ENCODE measurements at regions of chr16 and their contacts with region 1.

Region 1: DNA sequence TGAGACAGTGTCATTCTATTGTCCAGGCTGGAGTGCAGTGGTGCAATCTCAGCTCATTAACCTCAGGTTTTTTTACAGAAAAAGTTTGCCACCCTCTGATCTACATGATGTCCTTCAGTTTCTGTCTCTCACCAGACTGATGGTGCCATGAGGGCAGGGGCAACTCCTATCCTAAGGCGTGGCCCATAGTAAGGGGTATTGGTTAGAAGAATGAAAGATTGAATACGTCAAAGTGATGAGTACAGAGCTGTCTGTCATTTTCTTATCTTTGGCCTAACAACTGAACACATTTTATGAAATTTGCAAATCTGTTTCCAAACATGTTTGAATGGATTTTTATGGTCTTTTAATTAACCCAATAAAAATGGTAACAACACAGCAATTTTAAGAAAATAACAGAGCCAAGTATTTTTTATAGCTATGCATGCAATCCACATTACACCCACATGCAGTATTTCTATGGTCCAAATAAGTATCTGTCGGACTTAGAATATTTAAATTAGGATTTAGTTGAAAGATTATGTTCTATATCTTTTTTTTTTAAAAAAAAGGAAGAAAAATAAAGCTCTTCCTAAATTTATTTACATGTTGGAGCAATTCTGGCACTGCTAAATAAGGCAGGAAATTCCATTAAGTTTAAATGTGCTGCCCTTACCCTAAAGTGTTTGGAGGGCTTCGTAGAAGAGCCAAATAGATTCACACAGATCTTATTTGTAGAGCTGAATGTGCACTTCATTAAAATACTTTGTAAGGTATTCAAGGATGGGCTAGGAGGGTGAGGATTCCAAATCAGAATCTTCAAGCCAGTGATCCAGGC is 192.8 kb downstream of the WWOX start:
- DNase-seq: no peak
- H3K4me3 ChIP-seq: no peak overlapping the region
- H3K27ac ChIP-seq: no peak overlapping the region
- H3K4me1 ChIP-seq: peaks cover 10% of the 10 kb centered on the region; the same call in 1 of the 2 replicates
- H3K27me3 ChIP-seq: no peaks in the 10 kb centered on the region
- CTCF ChIP-seq: no peak

Region 2: GRCh38 chr16:78184238-78185183 is 107.8 kb before region 1 on chr16:
- CTCF ChIA-PET with region 1: no interaction called
- POLR2A ChIA-PET with region 1: no interaction called
- intact Hi-C with region 1: no loop called
- DNase-seq: no peak
- H3K4me3 ChIP-seq: no peak overlapping the region
- H3K27ac ChIP-seq: no peak overlapping the region
- H3K4me1 ChIP-seq: no peaks in the 10 kb centered on the region
- H3K27me3 ChIP-seq: no peaks in the 10 kb centered on the region
- CTCF ChIP-seq: no peak

Region 3: GRCh38 chr16:78257376-78257728 is 34.9 kb before region 1 on chr16:
- CTCF ChIA-PET with region 1: no interaction called
- POLR2A ChIA-PET with region 1: no interaction called
- intact Hi-C with region 1: no loop called
- DNase-seq: no peak
- H3K4me3 ChIP-seq: no peak overlapping the region
- H3K27ac ChIP-seq: no peak overlapping the region
- H3K4me1 ChIP-seq: no peaks in the 10 kb centered on the region
- H3K27me3 ChIP-seq: no peaks in the 10 kb centered on the region
- CTCF ChIP-seq: no peak

Region 4: DNA sequence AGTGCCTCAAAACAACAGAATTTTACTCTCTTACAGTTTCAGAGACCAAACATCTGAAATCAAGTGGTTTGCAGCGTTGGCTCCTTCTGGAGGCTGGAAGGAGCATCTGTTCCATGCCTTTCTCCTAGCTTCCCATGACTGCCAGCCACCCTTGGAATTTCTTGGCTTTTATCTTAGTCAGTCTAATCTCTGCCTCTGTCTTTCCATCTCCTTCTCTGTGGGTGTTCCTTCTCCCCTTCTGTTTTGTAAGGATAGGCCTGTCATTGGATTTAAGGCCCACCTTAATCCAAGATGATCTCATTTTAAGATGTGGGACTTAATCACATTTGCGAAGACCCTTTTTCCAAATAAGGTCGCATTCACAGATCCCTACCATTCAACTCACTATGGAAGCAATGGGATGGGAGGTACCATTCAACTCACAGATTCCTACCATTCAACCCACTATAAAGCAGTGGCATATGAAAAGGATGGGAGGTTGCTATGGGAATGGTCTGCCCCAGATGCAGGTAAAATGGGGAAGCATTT is 129.0 kb after region 1 on chr16:
- CTCF ChIA-PET with region 1: no interaction called
- POLR2A ChIA-PET with region 1: no interaction called
- intact Hi-C with region 1: no loop called
- DNase-seq: no peak
- H3K4me3 ChIP-seq: no peak overlapping the region
- H3K27ac ChIP-seq: no peak overlapping the region
- H3K4me1 ChIP-seq: no peaks in the 10 kb centered on the region
- H3K27me3 ChIP-seq: no peaks in the 10 kb centered on the region
- CTCF ChIP-seq: no peak

Region 5: GRCh38 chr16:78478267-78478861 is 186.1 kb after region 1 on chr16:
- CTCF ChIA-PET with region 1: no interaction called
- POLR2A ChIA-PET with region 1: interaction called, 10 read pairs
- intact Hi-C with region 1: no loop called
- DNase-seq: peak in 1 of 2 experiments; percentile 26
- H3K4me3 ChIP-seq: no peak overlapping the region
- H3K27ac ChIP-seq: no peak overlapping the region
- H3K4me1 ChIP-seq: no peaks in the 10 kb centered on the region
- H3K27me3 ChIP-seq: no peaks in the 10 kb centered on the region
- CTCF ChIP-seq: peak; percentile 75

Measured in PC-9 (cell line).